Activated T-helper 1 cell treated with anti-CD3 and anti-CD28 coated beads, Interleukin-12 subunit alpha, Interleukin-12 subunit beta, Interleukin-2, Interleukin-4 antibody, amounts not matched to agents 30 ng/mL and 10 ng/mL and 1 ng/mL, durations not matched to agents 14 hours and 24 hours and 36 hours (primary cell): ENCODE measurements at regions of chrX and their contacts with region 1.

Region 1: GRCh38 chrX:136496770-136497598 is at the start of gene HTATSF1:
- DNase-seq: peak; percentile 83
- H3K4me3 Mint-ChIP-seq: peak within 1 kb of the TSS; percentile 92
- H3K27ac Mint-ChIP-seq: peak within 1 kb of the TSS; percentile 99
- H3K4me1 Mint-ChIP-seq: peaks cover 20% of the 10 kb centered on the region
- H3K27me3 Mint-ChIP-seq: no peaks in the 10 kb centered on the region
- total RNA-seq, gene HTATSF1: 50.2 and 54.2 TPM in 2 replicates

Region 2: GRCh38 chrX:135985141-135985972 is 511.6 kb before region 1 on chrX and contains the start of gene SLC9A6:
- intact Hi-C with region 1: loop called (anchors 2 kb)
- DNase-seq: peak; percentile 59
- H3K4me3 Mint-ChIP-seq: peak within 1 kb of the TSS; percentile 92
- H3K27ac Mint-ChIP-seq: peak within 1 kb of the TSS; percentile 86
- H3K4me1 Mint-ChIP-seq: peaks cover 52% of the 10 kb centered on the region
- H3K27me3 Mint-ChIP-seq: no peaks in the 10 kb centered on the region
- total RNA-seq, gene SLC9A6: 12.7 and 13.4 TPM in 2 replicates

Region 3: GRCh38 chrX:136227948-136228838 is 268.8 kb before region 1 on chrX:
- intact Hi-C with region 1: no loop called
- DNase-seq: no peak
- H3K4me3 Mint-ChIP-seq: no peak overlapping the region
- H3K27ac Mint-ChIP-seq: peak overlapping the region; percentile 61
- H3K4me1 Mint-ChIP-seq: peaks cover 33% of the 10 kb centered on the region
- H3K27me3 Mint-ChIP-seq: no peaks in the 10 kb centered on the region

Region 4: GRCh38 chrX:136588041-136588788 is 91.2 kb after region 1 on chrX:
- intact Hi-C with region 1: loop called (anchors 2 kb)
- DNase-seq: no peak
- H3K4me3 Mint-ChIP-seq: peak overlapping the region; percentile 4
- H3K27ac Mint-ChIP-seq: peak overlapping the region; percentile 89
- H3K4me1 Mint-ChIP-seq: peaks cover 59% of the 10 kb centered on the region
- H3K27me3 Mint-ChIP-seq: no peaks in the 10 kb centered on the region

Region 5: GRCh38 chrX:136694431-136695087 is 197.6 kb after region 1 on chrX:
- intact Hi-C with region 1: loop called (anchors 1 kb)
- DNase-seq: no peak
- H3K4me3 Mint-ChIP-seq: peak overlapping the region; percentile 80
- H3K27ac Mint-ChIP-seq: peak overlapping the region; percentile 99
- H3K4me1 Mint-ChIP-seq: peaks cover 70% of the 10 kb centered on the region
- H3K27me3 Mint-ChIP-seq: no peaks in the 10 kb centered on the region

Region 6: GRCh38 chrX:136880452-136881013 is 383.5 kb after region 1 on chrX and contains the start of gene RBMX:
- intact Hi-C with region 1: loop called (anchors 1 kb)
- DNase-seq: peak; percentile 84
- H3K4me3 Mint-ChIP-seq: peak within 1 kb of the TSS; percentile 98
- H3K27ac Mint-ChIP-seq: peak within 1 kb of the TSS; percentile 99
- H3K4me1 Mint-ChIP-seq: peaks cover 6% of the 10 kb centered on the region
- H3K27me3 Mint-ChIP-seq: no peaks in the 10 kb centered on the region
- total RNA-seq, gene RBMX: 308 and 327 TPM in 2 replicates